ENCODE measurements at regions of chr4 and their contacts with region 1.

Region 1: DNA sequence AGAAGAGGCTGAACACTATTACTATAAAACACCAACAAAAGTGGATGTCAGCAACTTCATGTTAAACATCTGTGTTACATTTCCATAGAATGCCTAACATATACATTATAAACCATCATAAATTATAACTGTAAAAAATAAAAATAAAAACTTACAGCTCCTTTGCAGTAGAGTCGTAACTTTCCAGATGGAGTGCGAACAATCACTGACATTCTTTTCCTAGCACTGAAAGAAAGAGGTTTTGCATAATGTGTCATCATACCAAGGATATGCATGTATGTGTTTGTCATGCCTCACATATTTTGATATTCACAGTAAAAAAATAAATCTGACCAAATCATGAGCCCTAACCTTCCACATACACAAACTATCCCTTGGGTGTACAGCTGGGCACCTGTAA is 113.1 kb downstream of the ATP8A1 start:
- DNase-seq: no peak
- H3K4me3 ChIP-seq: no peak overlapping the region
- H3K4me1 ChIP-seq: no peaks in the 10 kb centered on the region
- H3K27me3 ChIP-seq: no peaks in the 10 kb centered on the region

Region 2: DNA sequence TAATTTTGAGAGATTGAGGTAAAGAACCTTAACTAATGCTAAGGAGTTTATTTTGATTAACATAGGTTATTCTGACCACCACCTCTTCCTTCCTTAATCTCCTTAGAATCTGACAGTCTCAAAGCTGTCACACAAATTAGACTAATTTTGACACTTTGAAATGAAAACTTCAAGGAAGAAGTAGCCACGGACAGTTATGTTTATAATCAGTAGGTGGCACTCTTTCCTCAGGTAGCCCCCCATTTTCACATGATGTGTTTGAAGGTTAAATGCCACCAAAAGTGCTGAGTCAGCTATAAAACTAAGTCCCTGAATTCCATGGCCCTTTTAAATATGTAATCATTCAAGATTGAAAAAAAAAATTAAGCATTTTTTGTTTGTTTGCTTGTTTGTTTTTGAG is 586.1 kb before region 1 on chr4:
- in situ Hi-C with region 1: loop called (anchors 25 kb)
- DNase-seq: peak; percentile 28 to 40
- H3K4me3 ChIP-seq: no peak overlapping the region
- H3K4me1 ChIP-seq: peaks cover 15% of the 10 kb centered on the region
- H3K27me3 ChIP-seq: no peaks in the 10 kb centered on the region